ENCODE measurements at regions of chr15 and their contacts with region 1.

Region 1: DNA sequence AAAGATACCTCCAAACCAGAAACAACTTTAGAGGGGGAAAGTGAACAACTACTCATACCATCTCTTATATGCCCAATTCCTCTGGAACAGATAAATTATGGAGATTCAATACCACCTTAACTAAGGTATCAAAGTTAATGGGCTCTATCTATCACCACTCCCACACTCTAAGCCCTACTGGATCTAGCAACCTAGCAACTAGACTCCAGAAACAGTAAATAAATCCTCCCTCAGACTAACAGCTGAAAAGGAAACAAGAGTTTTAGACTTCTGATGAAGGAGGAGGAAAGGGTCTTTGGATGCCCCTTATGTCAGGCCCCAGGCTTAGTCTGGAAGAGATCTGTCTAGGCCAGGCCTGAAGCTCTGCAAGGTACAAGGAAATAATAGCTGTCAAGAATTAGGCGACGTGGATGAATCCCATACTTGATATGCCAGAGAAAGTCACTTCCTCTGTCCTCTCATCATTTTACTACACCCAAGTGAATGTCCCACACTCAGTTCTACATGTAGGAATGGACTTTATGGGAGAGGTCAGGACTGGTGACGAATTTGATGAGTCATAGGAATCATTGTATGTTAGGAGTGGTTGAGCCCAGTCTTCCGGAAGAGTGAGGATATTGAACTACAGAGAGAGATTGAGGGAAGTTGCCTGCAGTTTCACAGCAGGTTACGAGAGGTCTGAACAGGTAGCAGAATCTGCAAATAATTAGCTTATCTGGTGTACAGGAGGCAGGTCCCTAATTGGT is 113.8 kb downstream of the AKAP13 start:
- DNase-seq: peak; percentile 40 to 95
- H3K4me3 ChIP-seq: no peak overlapping the region
- H3K27ac ChIP-seq: peak overlapping the region; percentile 84
- H3K4me1 ChIP-seq: peaks cover 30% of the 10 kb centered on the region
- H3K27me3 ChIP-seq: no peaks in the 10 kb centered on the region
- CTCF ChIP-seq: no peak

Region 2: GRCh38 chr15:83658430-83659416 is 1835.5 kb before region 1 on chr15:
- CTCF ChIA-PET with region 1: no interaction called
- POLR2A ChIA-PET with region 1: no interaction called
- intact Hi-C with region 1: no loop called
- DNase-seq: no peak
- H3K4me3 ChIP-seq: no peak overlapping the region
- H3K27ac ChIP-seq: no peak overlapping the region
- H3K4me1 ChIP-seq: no peaks in the 10 kb centered on the region
- H3K27me3 ChIP-seq: no peaks in the 10 kb centered on the region
- CTCF ChIP-seq: no peak

Region 3: GRCh38 chr15:85394552-85395333 is 99.5 kb before region 1 on chr15:
- CTCF ChIA-PET with region 1: no interaction called
- POLR2A ChIA-PET with region 1: interaction called, 21 read pairs
- intact Hi-C with region 1: no loop called
- DNase-seq: peak in 1 of 2 experiments; percentile 41
- H3K4me3 ChIP-seq: no peak overlapping the region
- H3K27ac ChIP-seq: peak overlapping the region; percentile 58
- H3K4me1 ChIP-seq: peaks cover 32% of the 10 kb centered on the region
- H3K27me3 ChIP-seq: no peaks in the 10 kb centered on the region
- CTCF ChIP-seq: no peak

Region 4: DNA sequence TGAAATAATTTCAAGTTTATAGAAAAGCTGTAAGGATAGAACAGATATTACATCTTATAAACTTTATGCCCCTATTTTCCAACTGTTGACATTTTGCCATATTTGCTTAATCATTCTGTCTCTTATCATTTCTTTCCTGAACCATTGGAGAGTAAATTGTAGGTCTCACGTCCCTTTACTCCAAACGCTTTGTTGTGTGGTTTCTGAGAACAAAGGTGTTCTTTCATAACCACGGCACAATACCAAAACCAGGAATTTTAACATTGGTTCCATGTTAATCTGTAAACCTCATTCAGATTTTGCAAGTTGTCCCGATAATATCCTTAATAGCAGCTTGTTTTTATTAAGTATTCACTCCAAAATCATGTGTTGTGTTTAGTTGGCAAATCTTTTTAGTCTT is 21.0 kb after region 1 on chr15:
- CTCF ChIA-PET with region 1: no interaction called
- POLR2A ChIA-PET with region 1: no interaction called
- intact Hi-C with region 1: no loop called
- DNase-seq: no peak
- H3K4me3 ChIP-seq: no peak overlapping the region
- H3K27ac ChIP-seq: no peak overlapping the region
- H3K4me1 ChIP-seq: no peaks in the 10 kb centered on the region
- H3K27me3 ChIP-seq: no peaks in the 10 kb centered on the region
- CTCF ChIP-seq: no peak

Region 5: GRCh38 chr15:85582131-85583079 is 88.2 kb after region 1 on chr15:
- CTCF ChIA-PET with region 1: no interaction called
- POLR2A ChIA-PET with region 1: no interaction called
- intact Hi-C with region 1: loop called (anchors 5 kb)
- DNase-seq: no peak
- H3K4me3 ChIP-seq: no peak overlapping the region
- H3K27ac ChIP-seq: peak overlapping the region; percentile 83
- H3K4me1 ChIP-seq: peaks cover 47% of the 10 kb centered on the region
- H3K27me3 ChIP-seq: no peaks in the 10 kb centered on the region
- CTCF ChIP-seq: no peak